ENCODE measurements at regions of chr5 and their contacts with region 1.

Region 1: GRCh38 chr5:68303038-68303738 is 87.6 kb downstream of the PIK3R1 start:
- DNase-seq: no peak
- ATAC-seq: peak; percentile 57
- H3K4me3 Mint-ChIP-seq: no peak overlapping the region
- H3K27ac Mint-ChIP-seq: peak overlapping the region; percentile 77
- H3K4me1 Mint-ChIP-seq: peaks cover 36% of the 10 kb centered on the region
- H3K27me3 Mint-ChIP-seq: no peaks in the 10 kb centered on the region
- CTCF ChIP-seq: no peak

Region 2: DNA sequence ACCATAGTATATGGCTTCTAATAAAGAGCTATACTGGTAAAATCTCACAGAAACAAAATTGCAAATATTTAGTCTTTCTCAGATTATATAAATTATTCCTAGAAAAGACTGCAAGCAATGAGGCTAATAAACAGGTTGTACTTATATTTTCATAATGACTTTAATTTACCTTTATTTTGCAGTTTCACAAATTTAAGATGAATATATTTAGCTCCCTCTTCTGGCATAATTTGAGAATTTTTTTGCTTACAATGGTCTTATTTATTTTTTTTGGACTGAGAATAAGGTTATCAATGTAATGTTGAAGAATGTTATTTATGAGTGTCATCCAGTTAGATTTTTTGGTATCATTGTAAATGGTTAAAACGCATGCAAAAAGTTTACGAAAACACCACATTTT is 30.9 kb before region 1 on chr5:
- CTCF ChIA-PET with region 1: no interaction called
- POLR2A ChIA-PET with region 1: no interaction called
- intact Hi-C with region 1: no loop called
- DNase-seq: no peak
- ATAC-seq: no peak
- H3K4me3 Mint-ChIP-seq: no peak overlapping the region
- H3K27ac Mint-ChIP-seq: no peak overlapping the region
- H3K4me1 Mint-ChIP-seq: peaks cover 85% of the 10 kb centered on the region
- H3K27me3 Mint-ChIP-seq: no peaks in the 10 kb centered on the region
- CTCF ChIP-seq: peak; percentile 67

Region 3: DNA sequence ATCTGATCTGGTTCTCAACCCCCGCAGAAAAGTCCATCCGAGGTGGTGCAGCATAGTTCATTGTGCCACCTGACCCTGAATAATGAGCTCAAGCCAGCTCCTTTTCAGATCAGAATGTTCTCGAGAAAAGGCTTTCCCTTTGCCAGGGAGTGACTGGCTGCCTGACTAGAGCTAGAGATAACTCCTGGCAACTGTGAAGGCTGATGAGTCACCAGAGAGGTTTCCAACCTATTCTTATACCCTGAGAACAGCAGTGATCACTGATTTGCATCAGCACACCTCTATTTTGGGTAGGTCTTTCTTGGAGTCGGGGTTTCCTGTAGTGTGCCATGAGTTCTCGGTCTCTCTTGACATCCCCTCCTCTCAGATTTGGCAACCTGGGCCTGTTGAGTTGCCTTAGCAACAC is 40.2 kb after region 1 on chr5:
- CTCF ChIA-PET with region 1: no interaction called
- POLR2A ChIA-PET with region 1: interaction called, 3 read pairs
- intact Hi-C with region 1: loop called (anchors 5 kb)
- DNase-seq: peak; percentile 42
- ATAC-seq: peak; percentile 88
- H3K4me3 Mint-ChIP-seq: no peak overlapping the region
- H3K27ac Mint-ChIP-seq: no peak overlapping the region
- H3K4me1 Mint-ChIP-seq: peaks cover 31% of the 10 kb centered on the region
- H3K27me3 Mint-ChIP-seq: no peaks in the 10 kb centered on the region
- CTCF ChIP-seq: no peak

Region 4: DNA sequence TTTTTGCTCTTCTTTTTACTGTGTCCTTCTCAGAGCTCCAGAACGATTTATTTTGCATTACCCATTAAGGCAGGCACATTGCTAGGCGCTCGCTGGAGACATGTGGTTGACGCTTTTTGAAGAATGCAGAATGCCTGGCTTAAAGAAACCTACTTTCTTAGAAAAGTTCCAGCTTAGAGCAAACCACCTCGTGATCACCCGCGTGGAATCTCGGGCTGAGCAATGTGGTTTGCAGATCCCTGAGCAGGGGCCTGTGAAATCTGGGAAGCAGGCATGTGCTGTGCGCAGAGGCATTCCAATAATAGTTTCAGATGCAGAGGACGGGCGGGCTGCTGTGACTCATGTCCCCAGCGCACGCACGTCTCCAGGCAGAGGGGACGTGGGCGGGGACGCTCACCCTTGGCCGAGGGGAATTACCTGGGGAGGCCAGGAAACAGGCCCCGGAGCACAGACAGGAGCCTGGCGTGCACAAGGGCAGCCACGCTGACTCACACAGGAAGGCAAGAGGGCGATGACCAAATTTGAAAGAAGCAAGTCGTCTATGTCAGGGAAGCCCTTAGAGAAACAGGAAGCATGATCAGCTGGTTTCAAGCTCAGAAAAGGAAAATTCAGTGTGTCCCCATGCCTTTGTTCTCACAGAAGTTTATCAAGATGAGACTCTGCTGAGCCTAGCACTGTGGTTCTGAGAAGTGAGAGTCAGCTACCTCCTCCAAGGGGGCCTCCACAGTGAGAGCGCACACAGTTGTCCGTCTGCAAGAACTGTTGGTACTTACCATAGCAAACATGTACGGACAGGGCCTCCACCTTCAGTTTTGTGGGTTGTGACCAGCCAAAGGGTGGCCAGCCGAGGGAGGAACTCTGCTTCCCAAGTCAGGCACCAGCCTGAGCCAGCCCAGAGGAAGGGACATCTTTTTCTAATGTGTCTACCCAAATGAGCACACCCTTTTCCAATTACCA is 131.0 kb after region 1 on chr5:
- CTCF ChIA-PET with region 1: interaction called, 3 read pairs
- POLR2A ChIA-PET with region 1: no interaction called
- intact Hi-C with region 1: loop called (anchors 5 kb)
- DNase-seq: peak; percentile 98
- ATAC-seq: peak; percentile 95
- H3K4me3 Mint-ChIP-seq: peak overlapping the region; percentile 33
- H3K27ac Mint-ChIP-seq: peak overlapping the region; percentile 78
- H3K4me1 Mint-ChIP-seq: peaks cover 57% of the 10 kb centered on the region
- H3K27me3 Mint-ChIP-seq: peaks cover 4% of the 10 kb centered on the region
- CTCF ChIP-seq: no peak

Region 5: DNA sequence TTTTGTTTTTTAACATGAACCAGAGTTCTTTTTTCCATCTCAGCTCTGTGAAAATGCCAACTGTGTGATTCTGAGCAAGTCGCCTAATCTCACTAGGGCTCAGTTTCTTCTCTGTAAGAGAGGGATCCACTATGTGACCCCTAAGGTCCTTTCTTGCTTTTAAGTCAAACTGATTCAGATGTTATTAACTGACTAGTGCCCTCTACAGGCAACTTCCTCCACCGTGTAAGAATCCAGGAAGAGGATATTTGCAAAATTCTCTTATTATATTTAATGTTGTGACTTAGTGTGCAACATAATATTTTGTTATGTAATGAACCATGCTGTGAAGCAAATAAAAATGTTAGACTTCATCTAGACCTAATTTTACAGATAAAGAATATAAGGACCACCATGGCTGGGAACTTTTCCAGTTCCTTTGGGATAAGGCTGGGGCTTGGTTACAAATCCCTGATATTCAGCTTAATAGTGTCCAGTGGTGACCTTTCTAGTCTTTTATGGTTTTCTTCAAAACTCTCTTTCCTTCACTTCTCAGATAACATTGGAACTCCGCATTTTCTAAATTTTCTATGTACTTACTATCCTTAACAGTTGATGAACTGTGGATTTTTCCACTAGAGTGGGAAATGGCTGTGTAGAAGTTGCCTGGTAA is 157.1 kb after region 1 on chr5:
- CTCF ChIA-PET with region 1: interaction called, 4 read pairs
- POLR2A ChIA-PET with region 1: no interaction called
- intact Hi-C with region 1: loop called (anchors 5 kb)
- DNase-seq: peak; percentile 70
- ATAC-seq: no peak
- H3K4me3 Mint-ChIP-seq: no peak overlapping the region
- H3K27ac Mint-ChIP-seq: no peak overlapping the region
- H3K4me1 Mint-ChIP-seq: peaks cover 14% of the 10 kb centered on the region
- H3K27me3 Mint-ChIP-seq: no peaks in the 10 kb centered on the region
- CTCF ChIP-seq: peak; percentile 86